Heart left ventricle (tissue), 16 donors: ENCODE measurements at regions of chr10 and their contacts with region 1.

Region 1: DNA sequence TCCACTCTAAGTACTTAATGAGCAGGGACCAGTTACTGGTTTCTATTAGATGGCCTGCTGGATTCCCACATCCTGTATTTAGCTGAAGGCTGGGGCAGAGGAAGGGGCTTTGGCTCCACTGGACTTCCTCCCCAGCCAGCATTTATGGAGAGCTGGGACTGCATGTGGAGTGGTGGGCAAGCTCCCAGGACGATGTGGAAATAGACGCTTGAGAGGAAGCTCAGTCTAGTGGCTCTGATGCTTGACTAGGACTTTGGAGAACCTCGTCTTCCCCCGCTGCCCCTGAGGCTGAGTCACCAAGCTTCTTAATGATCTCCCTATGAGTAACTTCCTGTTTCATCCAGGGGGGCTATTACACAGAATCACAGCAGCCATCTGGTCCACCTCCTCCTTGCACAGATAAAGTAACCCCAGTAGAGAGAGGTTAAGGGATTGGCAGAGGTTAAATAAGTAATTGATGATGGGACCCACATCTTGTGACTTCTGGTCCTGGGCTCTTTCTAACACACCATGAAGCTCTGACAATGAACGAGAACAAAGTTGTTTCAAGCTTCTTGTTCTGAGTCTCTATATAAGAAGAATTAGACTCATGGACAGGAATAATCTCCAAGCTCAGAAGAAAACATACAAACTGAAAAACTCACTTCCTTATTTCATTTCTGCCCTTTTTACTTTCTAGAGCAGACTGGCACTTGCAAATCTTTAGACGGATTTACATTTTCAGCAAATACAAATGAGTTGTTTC is 126.2 kb downstream of the PRPF18 start:
- DNase-seq: peak; percentile 77 to 91 (median 84)
- ATAC-seq: peak; percentile 39 to 90 (median 82)
- H3K4me3 ChIP-seq: no peak overlapping the region
- H3K27ac ChIP-seq: peak overlapping the region; percentile 12 to 84 (median 42)
- H3K4me1 ChIP-seq: peaks cover 4 to 75% (median 35%) of the 10 kb centered on the region in 12 donors
- H3K27me3 ChIP-seq: no peaks in the 10 kb centered on the region
- CTCF ChIP-seq: no peak
- POLR2A ChIP-seq: no peak

Region 2: GRCh38 chr10:13690281-13690825 is 22.7 kb before region 1 on chr10:
- intact Hi-C with region 1: no loop called
- DNase-seq: no peak
- ATAC-seq: no peak
- H3K4me3 ChIP-seq: no peak overlapping the region
- H3K27ac ChIP-seq: peak overlapping the region in 1 of 12 donors; percentile 9
- H3K4me1 ChIP-seq: peaks cover 4 to 49% (median 27%) of the 10 kb centered on the region in 12 donors
- H3K27me3 ChIP-seq: no peaks in the 10 kb centered on the region
- CTCF ChIP-seq: no peak
- POLR2A ChIP-seq: no peak

Region 3: GRCh38 chr10:13776861-13777311 is 63.9 kb after region 1 on chr10:
- intact Hi-C with region 1: loop called in 3 of 10 experiments (anchors 5 to 10 kb)
- DNase-seq: no peak
- ATAC-seq: no peak
- H3K4me3 ChIP-seq: no peak overlapping the region
- H3K27ac ChIP-seq: no peak overlapping the region
- H3K4me1 ChIP-seq: peaks cover 0 to 29% (median 11%) of the 10 kb centered on the region in 12 donors
- H3K27me3 ChIP-seq: no peaks in the 10 kb centered on the region
- CTCF ChIP-seq: no peak
- POLR2A ChIP-seq: no peak